ENCODE measurements at regions of chr12 and their contacts with region 1.

Region 1: DNA sequence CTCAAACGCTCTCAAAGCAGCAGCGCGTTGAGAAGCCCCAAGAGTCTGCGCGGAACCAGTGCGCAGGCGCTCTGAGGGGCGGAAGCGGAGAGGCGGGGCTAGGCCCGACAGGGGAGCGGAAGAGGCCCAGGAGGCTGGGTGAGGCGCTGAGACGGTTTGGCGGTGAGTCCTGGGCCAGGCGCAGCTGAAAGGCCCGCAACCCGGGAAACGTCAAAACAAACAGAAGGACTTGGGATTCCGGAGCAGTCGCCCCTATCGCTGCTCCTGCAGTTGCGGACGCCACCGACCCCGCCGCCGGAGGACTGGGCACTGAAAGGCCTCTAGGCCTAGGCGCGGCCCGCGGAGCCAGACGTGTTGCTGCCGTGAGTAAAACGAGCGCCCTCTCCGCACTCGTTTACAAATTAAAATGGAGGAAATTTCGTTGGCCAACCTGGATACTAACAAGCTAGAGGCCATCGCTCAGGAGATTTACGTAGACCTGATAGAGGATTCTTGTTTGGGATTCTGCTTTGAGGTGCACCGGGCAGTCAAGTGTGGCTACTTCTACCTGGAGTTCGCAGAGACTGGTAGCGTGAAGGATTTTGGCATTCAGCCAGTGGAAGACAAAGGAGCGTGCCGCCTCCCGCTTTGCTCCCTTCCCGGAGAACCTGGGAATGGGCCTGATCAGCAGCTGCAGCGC is at the start of gene ATXN7L3B:
- DNase-seq: peak; percentile 94 to 98 (median 97)
- ATAC-seq: peak; percentile 97
- H3K4me3 ChIP-seq: peak within 1 kb of the TSS; percentile 85
- H3K4me3 Mint-ChIP-seq: peak within 1 kb of the TSS; percentile 87 to 99 (median 97)
- H3K27ac ChIP-seq: peak within 1 kb of the TSS; percentile 94
- H3K27ac Mint-ChIP-seq: peak within 1 kb of the TSS; percentile 96 to 100 (median 99)
- H3K4me1 ChIP-seq: peaks cover 27 to 32% of the 10 kb centered on the region in 2 donors
- H3K4me1 Mint-ChIP-seq: peaks cover 39 to 60% (median 54%) of the 10 kb centered on the region in 7 donors
- H3K27me3 ChIP-seq: no peaks in the 10 kb centered on the region
- H3K27me3 Mint-ChIP-seq: no peaks in the 10 kb centered on the region
- total RNA-seq, gene ATXN7L3B: 25.6 to 51.6 (median 46.9) TPM

Region 2: DNA sequence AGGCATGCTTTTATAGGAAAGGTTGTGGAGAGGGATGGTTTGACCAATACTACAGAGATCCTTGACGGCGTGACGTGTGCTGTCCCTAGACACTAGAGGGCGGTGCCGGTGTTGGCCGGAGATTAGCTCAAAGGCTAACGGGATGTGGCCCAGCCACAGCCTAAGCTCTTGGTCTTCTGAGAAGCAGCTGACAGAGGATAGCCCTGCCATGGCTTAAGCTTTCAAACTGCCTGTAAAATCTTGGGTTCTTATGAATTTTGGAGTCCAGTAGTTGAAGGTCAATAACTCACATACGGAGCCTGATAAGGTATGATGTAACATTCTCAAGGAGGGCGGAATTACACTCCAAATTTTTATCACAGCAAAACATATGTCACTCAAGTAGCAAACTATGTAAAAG is 515.9 kb before region 1 on chr12:
- CTCF ChIA-PET with region 1: no interaction called
- POLR2A ChIA-PET with region 1: no interaction called
- intact Hi-C with region 1: loop called in 1 of 2 experiments (anchors 2 kb)
- DNase-seq: no peak
- ATAC-seq: no peak
- H3K4me3 ChIP-seq: no peak overlapping the region
- H3K4me3 Mint-ChIP-seq: no peak overlapping the region
- H3K27ac ChIP-seq: no peak overlapping the region
- H3K27ac Mint-ChIP-seq: no peak overlapping the region
- H3K4me1 ChIP-seq: no peaks in the 10 kb centered on the region
- H3K4me1 Mint-ChIP-seq: no peaks in the 10 kb centered on the region
- H3K27me3 ChIP-seq: no peaks in the 10 kb centered on the region
- H3K27me3 Mint-ChIP-seq: no peaks in the 10 kb centered on the region

Region 3: GRCh38 chr12:74415633-74416032 is 122.2 kb before region 1 on chr12:
- CTCF ChIA-PET with region 1: no interaction called
- POLR2A ChIA-PET with region 1: no interaction called
- intact Hi-C with region 1: loop called (anchors 1 kb)
- DNase-seq: no peak
- ATAC-seq: no peak
- H3K4me3 ChIP-seq: no peak overlapping the region
- H3K4me3 Mint-ChIP-seq: no peak overlapping the region
- H3K27ac ChIP-seq: no peak overlapping the region
- H3K27ac Mint-ChIP-seq: no peak overlapping the region
- H3K4me1 ChIP-seq: no peaks in the 10 kb centered on the region
- H3K4me1 Mint-ChIP-seq: no peaks in the 10 kb centered on the region
- H3K27me3 ChIP-seq: no peaks in the 10 kb centered on the region
- H3K27me3 Mint-ChIP-seq: peaks cover 4 to 19% (median 11%) of the 10 kb centered on the region in 5 donors

Measured in naive thymus-derived CD4-positive, alpha-beta T cell (primary cell).